ENCODE measurements at regions of chr13 and their contacts with region 1.

Region 1: GRCh38 chr13:95191821-95192563 is 109.3 kb downstream of the ABCC4 start:
- DNase-seq: peak; percentile 87
- H3K4me3 ChIP-seq: no peak overlapping the region
- H3K27ac ChIP-seq: no peak overlapping the region
- H3K4me1 ChIP-seq: no peaks in the 10 kb centered on the region
- H3K27me3 ChIP-seq: no peaks in the 10 kb centered on the region
- CTCF ChIP-seq: peak; percentile 57 to 78 (median 71)
- EP300 ChIP-seq: no peak
- POLR2A ChIP-seq: no peak

Region 2: GRCh38 chr13:95267662-95268342 is 75.8 kb after region 1 on chr13:
- intact Hi-C with region 1: loop called (anchors 5 kb)
- DNase-seq: peak; percentile 73
- H3K4me3 ChIP-seq: no peak overlapping the region
- H3K27ac ChIP-seq: peak overlapping the region in 3 of 4 donors; percentile 59 to 80 (median 79)
- H3K4me1 ChIP-seq: peaks cover 2 to 56% (median 53%) of the 10 kb centered on the region in 4 donors
- H3K27me3 ChIP-seq: no peaks in the 10 kb centered on the region
- CTCF ChIP-seq: no peak
- EP300 ChIP-seq: no peak
- POLR2A ChIP-seq: no peak

Region 3: GRCh38 chr13:95301183-95301967 is 109.4 kb after region 1 on chr13 and contains the start of gene ABCC4:
- intact Hi-C with region 1: loop called (anchors 5 kb)
- DNase-seq: peak; percentile 88
- H3K4me3 ChIP-seq: peak within 1 kb of the TSS; percentile 62 to 96 (median 87)
- H3K27ac ChIP-seq: peak within 1 kb of the TSS; percentile 71 to 85 (median 83)
- H3K4me1 ChIP-seq: peaks cover 0 to 44% (median 23%) of the 10 kb centered on the region in 4 donors
- H3K27me3 ChIP-seq: no peaks in the 10 kb centered on the region
- CTCF ChIP-seq: no peak
- EP300 ChIP-seq: no peak
- POLR2A ChIP-seq: no peak
- total RNA-seq, gene ABCC4: 24.3 to 56.3 (median 43.1) TPM

Region 4: DNA sequence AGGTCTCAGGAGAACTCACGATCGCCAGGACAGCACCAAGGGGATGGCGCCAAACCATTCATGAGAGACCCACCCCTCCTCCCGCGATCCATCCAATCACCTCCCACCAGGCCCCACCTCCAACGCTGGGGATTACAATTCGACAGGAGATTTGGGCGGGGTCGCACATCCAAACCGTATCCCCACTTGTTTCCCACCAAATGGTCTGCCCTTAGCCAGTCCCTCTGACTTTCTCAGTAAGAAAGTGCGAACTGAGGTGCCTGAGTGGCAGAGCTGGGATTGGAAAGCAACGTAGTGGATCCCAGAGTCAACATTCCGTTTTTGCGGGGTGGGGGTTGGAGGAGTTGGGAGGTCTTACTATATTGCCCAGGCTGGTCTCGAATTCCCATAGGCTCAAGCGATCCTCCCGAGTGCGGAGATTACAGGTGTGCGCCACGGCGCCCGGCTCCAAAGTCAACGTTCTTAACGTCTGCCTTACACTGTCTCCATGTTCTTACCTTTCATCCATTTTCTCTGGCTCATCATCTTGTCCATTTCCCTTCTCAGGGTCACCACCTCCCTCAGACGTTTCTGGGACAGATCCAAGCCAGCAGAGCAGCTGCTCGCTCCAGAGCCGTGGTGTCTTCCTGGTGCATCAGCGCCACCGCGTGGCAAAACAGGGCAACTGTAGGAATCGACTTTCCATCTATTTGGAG is 212.0 kb after region 1 on chr13:
- intact Hi-C with region 1: loop called (anchors 1 kb)
- DNase-seq: peak; percentile 91
- H3K4me3 ChIP-seq: peak overlapping the region in 3 of 4 donors; percentile 26 to 39 (median 35)
- H3K27ac ChIP-seq: no peak overlapping the region
- H3K4me1 ChIP-seq: peaks cover 0 to 9% (median 6%) of the 10 kb centered on the region in 4 donors
- H3K27me3 ChIP-seq: no peaks in the 10 kb centered on the region
- CTCF ChIP-seq: peak; percentile 87 to 94 (median 94)
- EP300 ChIP-seq: no peak
- POLR2A ChIP-seq: no peak

Measured in sigmoid colon (tissue), 7 donors.